ENCODE measurements at regions of chr1 and their contacts with region 1.

Region 1: GRCh38 chr1:81314513-81315233 is 486.1 kb upstream of the ADGRL2 start:
- DNase-seq: no peak
- H3K4me3 ChIP-seq: no peak overlapping the region
- H3K27ac ChIP-seq: no peak overlapping the region
- H3K27me3 ChIP-seq: peaks cover 0 to 4% (median 0%) of the 10 kb centered on the region in 45 donors
- CTCF ChIP-seq: peak in 1 of 56 donors; percentile 8

Region 2: GRCh38 chr1:80827666-80828065 is 487.0 kb before region 1 on chr1:
- intact Hi-C with region 1: no loop called
- DNase-seq: no peak
- H3K4me3 ChIP-seq: no peak overlapping the region
- H3K27ac ChIP-seq: no peak overlapping the region
- H3K27me3 ChIP-seq: no peaks in the 10 kb centered on the region
- CTCF ChIP-seq: no peak

Region 3: GRCh38 chr1:80846963-80847362 is 467.7 kb before region 1 on chr1:
- intact Hi-C with region 1: no loop called
- DNase-seq: no peak
- H3K4me3 ChIP-seq: no peak overlapping the region
- H3K27ac ChIP-seq: no peak overlapping the region
- H3K27me3 ChIP-seq: peaks cover 0 to 3% (median 0%) of the 10 kb centered on the region in 45 donors
- CTCF ChIP-seq: no peak

Region 4: DNA sequence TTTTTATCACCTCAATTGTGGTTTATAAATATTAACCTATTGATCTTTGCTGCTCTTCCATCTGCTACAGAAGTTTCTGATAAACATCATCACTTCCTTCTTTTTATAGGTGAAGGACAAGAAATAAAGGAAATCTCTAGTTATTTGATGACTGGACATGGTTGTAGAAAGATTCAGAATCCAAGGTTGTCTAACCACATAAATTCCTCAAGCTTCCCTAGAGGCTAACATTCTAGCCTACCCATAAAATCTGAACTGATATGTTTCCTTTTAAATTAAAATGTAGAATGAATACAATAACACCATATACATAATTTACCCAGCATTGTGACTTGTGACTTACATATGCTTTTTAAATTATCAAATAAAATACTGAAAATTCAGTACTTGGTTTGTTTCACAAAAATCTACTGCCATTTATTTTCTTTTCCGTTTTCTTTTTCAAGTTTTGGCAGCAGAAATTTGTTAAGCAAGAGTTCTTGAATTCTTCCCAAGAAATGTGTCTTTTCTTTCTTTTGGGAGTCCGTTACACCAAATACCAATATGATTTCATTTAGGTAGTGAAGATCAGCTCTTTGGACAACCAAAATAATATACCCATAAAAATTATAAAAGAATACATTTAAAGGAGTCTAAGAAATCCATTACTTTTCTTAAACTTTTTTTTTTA is 27.1 kb before region 1 on chr1:
- intact Hi-C with region 1: no loop called
- DNase-seq: no peak
- H3K4me3 ChIP-seq: no peak overlapping the region
- H3K27ac ChIP-seq: no peak overlapping the region
- H3K27me3 ChIP-seq: no peaks in the 10 kb centered on the region
- CTCF ChIP-seq: no peak

Region 5: DNA sequence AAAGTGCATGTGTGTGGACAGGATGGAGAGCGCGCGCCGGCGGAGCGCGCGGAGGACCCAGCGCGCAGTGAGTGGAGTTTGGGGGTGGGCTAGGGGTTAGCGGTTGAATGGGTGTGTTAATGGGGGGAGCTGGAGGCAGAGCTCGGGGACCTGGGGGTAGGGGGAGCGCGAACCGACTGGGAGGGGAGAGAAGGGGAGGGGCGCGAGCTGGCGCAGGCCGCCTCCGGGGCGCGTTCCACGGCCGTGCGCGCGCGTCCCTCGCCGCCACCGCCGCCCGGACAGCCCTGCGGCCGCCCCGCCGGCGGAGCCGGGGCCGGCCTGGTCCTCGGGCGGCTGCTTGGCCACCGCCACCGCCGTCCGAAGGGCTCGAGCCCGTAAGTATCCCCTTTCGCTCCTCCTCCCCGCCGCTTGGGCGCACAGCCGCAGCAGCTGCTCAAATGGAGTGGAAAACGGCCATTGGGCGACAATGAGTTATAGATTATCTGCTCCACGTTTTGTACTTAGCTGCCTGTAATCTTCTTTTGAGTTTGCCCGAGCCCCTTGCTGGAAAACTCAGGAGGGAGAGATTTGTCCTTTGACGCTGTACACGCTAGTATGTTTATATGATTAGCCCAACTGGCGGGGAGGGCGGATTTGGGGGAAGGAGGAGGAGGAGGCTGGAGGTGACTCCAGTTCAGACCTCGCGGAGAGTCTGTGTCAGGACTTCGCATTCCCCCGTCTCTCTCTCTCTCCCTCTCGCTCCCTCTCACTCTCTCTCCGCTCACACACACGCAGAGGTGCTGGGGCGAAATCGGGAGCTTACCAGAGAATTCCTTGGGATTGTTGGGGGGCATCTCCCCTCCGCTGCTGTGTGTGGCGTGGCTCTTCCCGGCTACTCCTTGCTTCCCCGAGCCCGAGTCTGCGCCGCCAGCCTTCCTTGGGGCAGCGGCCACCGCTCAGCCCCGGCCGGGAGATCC is 486.3 kb after region 1 on chr1 and contains the start of gene ADGRL2:
- intact Hi-C with region 1: loop called in 1 of 2 experiments (anchors 5 kb)
- DNase-seq: peak in 8 of 10 donors; percentile 6 to 70 (median 56)
- H3K4me3 ChIP-seq: peak within 1 kb of the TSS; percentile 52 to 84 (median 73)
- H3K27ac ChIP-seq: peak within 1 kb of the TSS in 58 of 59 donors; percentile 11 to 98 (median 91)
- H3K27me3 ChIP-seq: peaks cover 0 to 67% (median 11%) of the 10 kb centered on the region in 45 donors
- CTCF ChIP-seq: no peak
- total RNA-seq, gene ADGRL2: 28.2 to 104 (median 65.9) TPM

Measured in dorsolateral prefrontal cortex (tissue), 120 donors.